Posterior cingulate gyrus (tissue), 11 donors: ENCODE measurements at regions of chr2 and their contacts with region 1.

Region 1: DNA sequence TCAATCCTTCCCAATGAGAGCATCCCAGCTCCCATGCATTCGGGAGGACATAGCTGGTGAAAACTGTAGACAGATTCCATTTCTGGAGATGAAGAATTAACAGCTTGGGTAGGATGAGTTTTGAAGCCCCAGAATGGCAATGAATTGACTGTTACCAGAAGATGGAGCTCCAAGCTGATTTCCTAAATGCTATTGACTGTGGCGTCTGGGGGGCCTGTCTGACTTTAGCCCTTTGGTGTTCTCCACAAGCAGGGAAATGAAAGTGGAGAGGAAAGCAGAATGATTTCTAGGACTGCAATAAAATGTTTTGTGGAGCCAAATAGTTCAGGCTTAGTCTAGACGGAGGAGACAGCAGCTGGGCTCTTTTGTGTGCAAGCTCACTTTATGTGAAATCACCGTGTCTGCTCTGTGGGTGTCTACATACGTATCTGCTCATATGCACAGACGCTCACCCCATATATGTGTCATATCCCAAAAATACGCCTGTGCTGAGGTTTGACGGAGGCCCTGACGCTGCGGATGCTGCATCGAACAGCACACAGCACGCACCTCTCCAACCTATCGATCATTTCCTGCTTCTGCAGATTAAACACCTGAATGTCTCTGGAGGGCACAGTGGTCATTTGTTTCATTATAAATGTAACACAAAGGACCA is 166.4 kb upstream of the PXDN start:
- DNase-seq: peak in 4 of 10 donors; percentile 28 to 87 (median 37)

Region 2: GRCh38 chr2:2014251-2014771 is 103.6 kb after region 1 on chr2:
- intact Hi-C with region 1: loop called (anchors 10 kb)
- DNase-seq: peak; percentile 82 to 98 (median 88)

Region 3: GRCh38 chr2:2116657-2117056 is 205.9 kb after region 1 on chr2:
- intact Hi-C with region 1: loop called (anchors 5 kb)
- DNase-seq: peak in 1 of 10 donors; percentile 36